ENCODE measurements at regions of chr5 and their contacts with region 1.

Region 1: DNA sequence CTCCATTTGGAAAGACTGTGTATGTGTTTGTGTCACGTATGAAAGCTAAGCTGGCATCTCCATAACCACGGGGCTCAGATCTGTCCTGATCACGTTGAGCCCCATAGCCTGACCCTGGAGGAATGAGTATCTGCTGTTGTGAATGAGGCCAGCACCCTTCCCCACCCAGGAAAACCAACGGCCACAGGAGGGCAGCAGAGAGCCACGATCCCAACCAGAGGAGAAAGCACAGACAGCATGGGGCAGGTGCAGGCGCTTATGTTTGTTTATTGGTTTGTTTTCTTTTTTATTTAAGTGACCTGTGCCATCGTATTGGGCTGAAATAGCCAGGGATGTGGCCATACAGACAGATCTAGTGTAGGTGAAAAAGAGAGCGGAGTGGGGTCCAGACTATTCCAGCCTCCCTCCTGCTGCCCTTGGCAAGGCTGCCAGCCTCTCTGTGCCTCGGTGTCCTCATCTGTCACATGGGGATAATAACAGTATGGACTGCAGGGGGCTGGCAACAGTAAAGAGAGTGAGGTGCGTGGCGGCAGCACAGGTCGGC is 12.0 kb downstream of the OR2V2 start:
- DNase-seq: peak; percentile 79 to 95 (median 87)
- ATAC-seq: peak; percentile 80
- H3K4me3 ChIP-seq: no peak overlapping the region
- H3K4me3 Mint-ChIP-seq: peak overlapping the region; percentile 57 to 83 (median 72)
- H3K27ac ChIP-seq: peak overlapping the region; percentile 89
- H3K27ac Mint-ChIP-seq: peak overlapping the region; percentile 73 to 97 (median 94)
- H3K4me1 ChIP-seq: peaks cover 15 to 19% of the 10 kb centered on the region in 2 donors
- H3K4me1 Mint-ChIP-seq: peaks cover 13 to 33% (median 27%) of the 10 kb centered on the region in 7 donors
- H3K27me3 ChIP-seq: no peaks in the 10 kb centered on the region
- H3K27me3 Mint-ChIP-seq: peaks cover 0 to 29% (median 17%) of the 10 kb centered on the region in 5 donors

Region 2: DNA sequence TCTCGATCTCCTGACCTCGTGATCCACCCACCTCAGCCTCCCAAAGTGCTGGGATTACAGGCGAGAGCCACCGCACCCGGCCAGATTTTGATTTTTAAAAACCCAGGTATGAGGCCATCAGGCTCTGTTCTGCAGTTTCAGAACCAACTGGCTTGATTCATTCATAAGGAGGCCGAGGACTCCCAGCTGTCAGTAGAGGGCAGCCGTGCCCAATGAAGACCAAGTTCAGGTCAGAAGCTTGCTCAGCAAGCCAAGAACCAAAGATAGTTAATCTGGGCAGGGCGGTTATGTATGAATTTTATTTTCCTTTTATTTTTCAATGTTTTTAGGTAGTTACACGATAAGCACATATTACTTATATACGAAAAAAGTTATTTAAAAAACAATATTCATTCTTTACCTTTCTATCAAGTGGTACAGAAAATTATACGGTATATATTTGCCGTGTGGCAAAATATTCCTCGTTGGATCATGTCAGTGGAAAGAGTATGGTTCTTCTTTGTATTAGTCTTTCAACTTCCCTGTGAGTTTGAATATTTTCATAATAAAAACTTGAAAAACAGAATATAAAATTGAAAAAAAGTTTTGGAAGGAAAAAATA is 374.8 kb before region 1 on chr5:
- CTCF ChIA-PET with region 1: interaction called, 8 read pairs
- POLR2A ChIA-PET with region 1: no interaction called
- intact Hi-C with region 1: loop called in 1 of 2 experiments (anchors 1 kb)
- DNase-seq: peak; percentile 45 to 78 (median 65)
- ATAC-seq: peak; percentile 87
- H3K4me3 ChIP-seq: no peak overlapping the region
- H3K4me3 Mint-ChIP-seq: no peak overlapping the region
- H3K27ac ChIP-seq: no peak overlapping the region
- H3K27ac Mint-ChIP-seq: peak overlapping the region in 6 of 9 donors; percentile 8 to 76 (median 33)
- H3K4me1 ChIP-seq: peaks cover 0 to 7% of the 10 kb centered on the region in 2 donors
- H3K4me1 Mint-ChIP-seq: peaks cover 23 to 58% (median 46%) of the 10 kb centered on the region in 7 donors
- H3K27me3 ChIP-seq: no peaks in the 10 kb centered on the region
- H3K27me3 Mint-ChIP-seq: no peaks in the 10 kb centered on the region

Region 3: GRCh38 chr5:181173420-181174342 is 14.3 kb after region 1 on chr5:
- CTCF ChIA-PET with region 1: no interaction called
- POLR2A ChIA-PET with region 1: interaction called, 7 read pairs
- intact Hi-C with region 1: loop called in 1 of 2 experiments (anchors 1 kb)
- DNase-seq: peak; percentile 19 to 81 (median 69)
- ATAC-seq: peak; percentile 75
- H3K4me3 ChIP-seq: peak overlapping the region; percentile 54
- H3K4me3 Mint-ChIP-seq: peak overlapping the region; percentile 64 to 98 (median 91)
- H3K27ac ChIP-seq: no peak overlapping the region
- H3K27ac Mint-ChIP-seq: peak overlapping the region; percentile 65 to 98 (median 85)
- H3K4me1 ChIP-seq: peaks cover 10 to 23% of the 10 kb centered on the region in 2 donors
- H3K4me1 Mint-ChIP-seq: peaks cover 20 to 45% (median 36%) of the 10 kb centered on the region in 7 donors
- H3K27me3 ChIP-seq: peaks cover 6 to 19% of the 10 kb centered on the region in 2 donors
- H3K27me3 Mint-ChIP-seq: peaks cover 32 to 69% (median 47%) of the 10 kb centered on the region in 5 donors

Region 4: GRCh38 chr5:181207214-181208107 is 48.1 kb after region 1 on chr5:
- CTCF ChIA-PET with region 1: no interaction called
- POLR2A ChIA-PET with region 1: interaction called, 8 read pairs
- intact Hi-C with region 1: loop called in 1 of 2 experiments (anchors 1 kb)
- DNase-seq: peak; percentile 38 to 87 (median 78)
- ATAC-seq: peak; percentile 70
- H3K4me3 ChIP-seq: peak overlapping the region; percentile 67
- H3K4me3 Mint-ChIP-seq: peak overlapping the region; percentile 88 to 99 (median 94)
- H3K27ac ChIP-seq: peak overlapping the region; percentile 73
- H3K27ac Mint-ChIP-seq: peak overlapping the region; percentile 90 to 100 (median 98)
- H3K4me1 ChIP-seq: peaks cover 5 to 11% of the 10 kb centered on the region in 2 donors
- H3K4me1 Mint-ChIP-seq: peaks cover 21 to 45% (median 37%) of the 10 kb centered on the region in 7 donors
- H3K27me3 ChIP-seq: peaks cover 0 to 4% of the 10 kb centered on the region in 2 donors
- H3K27me3 Mint-ChIP-seq: peaks cover 0 to 36% (median 11%) of the 10 kb centered on the region in 5 donors

Measured in naive thymus-derived CD4-positive, alpha-beta T cell (primary cell).